ENCODE measurements at regions of chr19 and their contacts with region 1.

Region 1: GRCh38 chr19:49614096-49614833 is 23.3 kb downstream of the PRR12 start:
- DNase-seq: peak; percentile 71 to 78
- ATAC-seq: peak; percentile 85 to 89
- H3K4me3 ChIP-seq: no peak overlapping the region
- H3K27ac ChIP-seq: peak overlapping the region; percentile 65 to 84; a peak in 5 of 6 replicates
- H3K4me1 ChIP-seq: peaks cover 34% of the 10 kb centered on the region
- CTCF ChIP-seq: peak; percentile 17; the same call in 1 of the 3 replicates
- EP300 ChIP-seq: no peak
- POLR2A ChIP-seq: no peak
- RAD21 ChIP-seq: no peak

Region 2: GRCh38 chr19:49624967-49625910 is 11.0 kb after region 1 on chr19:
- CTCF ChIA-PET with region 1: interaction called, 11 read pairs
- POLR2A ChIA-PET with region 1: no interaction called
- DNase-seq: no peak
- ATAC-seq: peak; percentile 28 to 43; a peak in 5 of 6 replicates
- H3K4me3 ChIP-seq: no peak overlapping the region
- H3K27ac ChIP-seq: no peak overlapping the region
- H3K4me1 ChIP-seq: no peaks in the 10 kb centered on the region
- CTCF ChIP-seq: no peak
- EP300 ChIP-seq: no peak
- POLR2A ChIP-seq: no peak
- RAD21 ChIP-seq: no peak

Region 3: DNA sequence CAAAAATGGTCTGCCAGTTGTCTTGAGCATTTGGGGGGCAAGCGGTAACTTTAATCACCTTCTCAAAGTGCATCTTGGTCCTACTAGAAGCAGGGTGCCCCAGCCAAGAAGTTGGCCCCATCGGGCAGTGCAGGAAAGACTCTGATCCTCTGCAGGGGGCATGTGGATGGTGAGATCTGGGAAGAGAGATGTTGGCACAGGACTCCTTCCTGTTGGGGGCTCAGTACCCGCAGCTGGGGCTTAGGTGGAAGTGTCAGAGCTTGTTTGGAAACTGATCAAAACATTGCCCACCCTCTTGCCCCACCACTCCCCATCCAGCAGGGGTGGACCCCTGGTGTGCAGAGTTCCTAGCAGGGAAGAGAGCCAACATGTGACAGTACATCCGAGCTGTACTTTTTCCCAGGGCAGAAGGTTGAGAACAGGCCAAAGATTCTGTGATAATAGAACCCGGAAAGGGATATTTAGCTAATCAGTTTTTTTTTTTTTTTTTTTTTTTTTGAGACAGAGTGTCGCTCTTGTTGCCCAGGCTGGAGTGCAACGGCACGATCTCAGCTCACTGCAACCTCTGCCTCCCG is 16.8 kb after region 1 on chr19:
- CTCF ChIA-PET with region 1: interaction called, 11 read pairs
- POLR2A ChIA-PET with region 1: no interaction called
- DNase-seq: no peak
- ATAC-seq: peak; percentile 9 to 14; a peak in 3 of 6 replicates
- H3K4me3 ChIP-seq: no peak overlapping the region
- H3K27ac ChIP-seq: no peak overlapping the region
- H3K4me1 ChIP-seq: no peaks in the 10 kb centered on the region
- CTCF ChIP-seq: no peak
- EP300 ChIP-seq: no peak
- POLR2A ChIP-seq: no peak
- RAD21 ChIP-seq: no peak

Region 4: DNA sequence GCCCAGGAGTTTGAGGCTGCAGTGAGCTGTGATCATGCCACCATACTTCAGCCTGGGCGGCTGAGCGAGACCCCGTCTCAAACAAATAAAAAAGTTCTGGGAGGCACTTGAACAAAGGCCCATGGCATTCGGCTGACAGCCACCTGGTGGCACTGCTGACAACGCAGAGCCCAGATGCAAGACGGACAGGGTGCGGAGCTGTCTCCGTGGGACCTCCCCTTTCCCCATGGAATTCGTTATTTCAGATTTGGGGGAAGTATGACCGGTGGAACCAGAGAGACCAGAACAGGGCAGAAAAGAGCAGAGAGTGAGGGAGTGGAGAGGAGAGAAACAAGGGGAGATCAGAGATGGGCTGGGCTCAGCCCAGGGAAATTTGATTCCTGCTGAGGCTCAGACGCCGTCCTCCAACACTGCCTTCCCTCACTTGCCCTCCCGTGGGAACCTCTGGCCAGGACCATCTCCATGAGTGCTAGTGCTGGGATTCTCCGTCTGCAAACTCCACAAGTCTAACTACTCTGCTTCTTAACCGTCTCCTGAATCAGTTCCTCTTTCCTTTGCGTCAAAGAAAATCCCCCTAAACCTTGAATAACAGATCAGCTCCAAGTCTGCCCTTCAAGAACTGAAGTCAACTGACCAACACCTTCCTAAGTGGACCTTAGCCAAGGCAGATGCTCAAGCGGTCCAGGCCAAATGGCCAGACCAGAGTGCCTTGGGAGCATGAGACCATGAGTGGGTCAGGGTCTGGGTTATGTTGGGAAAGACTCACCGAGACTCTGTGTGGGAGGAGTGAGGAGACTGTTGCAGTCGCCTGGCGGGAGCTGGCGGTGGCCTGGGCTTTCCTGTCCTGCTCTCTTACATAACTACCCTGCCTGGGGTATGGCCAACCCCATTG is 302.8 kb after region 1 on chr19:
- CTCF ChIA-PET with region 1: no interaction called
- POLR2A ChIA-PET with region 1: no interaction called
- DNase-seq: no peak
- ATAC-seq: peak; percentile 25 to 42; a peak in 3 of 6 replicates
- H3K4me3 ChIP-seq: no peak overlapping the region
- H3K27ac ChIP-seq: no peak overlapping the region
- H3K4me1 ChIP-seq: no peaks in the 10 kb centered on the region
- CTCF ChIP-seq: peak; percentile 23; the same call in 1 of the 3 replicates
- EP300 ChIP-seq: no peak
- POLR2A ChIP-seq: no peak
- RAD21 ChIP-seq: peak in 1 of 2 experiments; percentile 28; a peak in 1 of 5 replicates